Left lung (tissue), 14 donors: ENCODE measurements at regions of chr6 and their contacts with region 1.

Region 1: GRCh38 chr6:75208298-75209183 is 2.7 kb upstream of the COL12A1 start:
- DNase-seq: peak; percentile 80 to 90 (median 86)
- ATAC-seq: peak; percentile 67
- H3K4me3 ChIP-seq: no peak overlapping the region
- H3K27ac ChIP-seq: no peak overlapping the region
- H3K4me1 ChIP-seq: peaks cover 6 to 42% of the 10 kb centered on the region in 2 donors
- H3K27me3 ChIP-seq: peaks cover 22 to 56% of the 10 kb centered on the region in 2 donors
- CTCF ChIP-seq: peak; percentile 74

Region 2: GRCh38 chr6:73732845-73733675 is 1475.5 kb before region 1 on chr6:
- intact Hi-C with region 1: loop called in 1 of 2 experiments (anchors 10 kb)
- DNase-seq: peak in 3 of 4 donors; percentile 34 to 72 (median 57)
- ATAC-seq: peak; percentile 99
- H3K4me3 ChIP-seq: no peak overlapping the region
- H3K27ac ChIP-seq: no peak overlapping the region
- H3K4me1 ChIP-seq: peaks cover 0 to 7% of the 10 kb centered on the region in 2 donors
- H3K27me3 ChIP-seq: no peaks in the 10 kb centered on the region
- CTCF ChIP-seq: peak; percentile 84 to 91

Region 3: DNA sequence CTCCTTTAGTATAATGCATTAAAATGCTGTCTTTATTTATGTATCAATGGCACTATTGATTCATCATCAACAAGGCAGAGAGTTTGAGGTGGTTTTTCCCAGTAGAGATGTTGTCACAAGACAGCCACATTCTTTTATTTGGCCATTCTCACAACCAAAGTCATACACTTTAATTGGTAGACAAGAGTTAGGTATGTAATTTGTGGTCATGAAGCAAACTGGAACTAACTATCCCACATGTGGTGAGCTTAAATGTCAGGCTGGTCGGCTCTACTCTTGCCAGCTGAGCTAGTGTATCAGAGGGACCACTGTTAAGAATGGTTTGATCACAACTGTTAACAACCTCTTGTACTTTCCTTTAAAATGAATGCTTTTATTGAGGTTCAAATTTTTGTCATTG is 797.9 kb before region 1 on chr6:
- intact Hi-C with region 1: loop called in 1 of 2 experiments (anchors 10 kb)
- DNase-seq: no peak
- ATAC-seq: no peak
- H3K4me3 ChIP-seq: no peak overlapping the region
- H3K27ac ChIP-seq: no peak overlapping the region
- H3K4me1 ChIP-seq: no peaks in the 10 kb centered on the region
- H3K27me3 ChIP-seq: no peaks in the 10 kb centered on the region
- CTCF ChIP-seq: no peak

Region 4: GRCh38 chr6:75656479-75656878 is 447.9 kb after region 1 on chr6:
- intact Hi-C with region 1: no loop called
- DNase-seq: no peak
- ATAC-seq: no peak
- H3K4me3 ChIP-seq: no peak overlapping the region
- H3K27ac ChIP-seq: no peak overlapping the region
- H3K4me1 ChIP-seq: no peaks in the 10 kb centered on the region
- H3K27me3 ChIP-seq: no peaks in the 10 kb centered on the region
- CTCF ChIP-seq: no peak